HEK293T (cell line): ENCODE measurements at regions of chr1 and their contacts with region 1.

Region 1: GRCh38 chr1:44721485-44722361 is 9.2 kb downstream of the RNU5D-1 start:
- DNase-seq: peak; percentile 80

Region 2: GRCh38 chr1:44696789-44697345 is 24.9 kb before region 1 on chr1:
- CTCF ChIA-PET with region 1: interaction called, 3 read pairs
- POLR2A ChIA-PET with region 1: interaction called, 13 read pairs
- DNase-seq: no peak

Region 3: DNA sequence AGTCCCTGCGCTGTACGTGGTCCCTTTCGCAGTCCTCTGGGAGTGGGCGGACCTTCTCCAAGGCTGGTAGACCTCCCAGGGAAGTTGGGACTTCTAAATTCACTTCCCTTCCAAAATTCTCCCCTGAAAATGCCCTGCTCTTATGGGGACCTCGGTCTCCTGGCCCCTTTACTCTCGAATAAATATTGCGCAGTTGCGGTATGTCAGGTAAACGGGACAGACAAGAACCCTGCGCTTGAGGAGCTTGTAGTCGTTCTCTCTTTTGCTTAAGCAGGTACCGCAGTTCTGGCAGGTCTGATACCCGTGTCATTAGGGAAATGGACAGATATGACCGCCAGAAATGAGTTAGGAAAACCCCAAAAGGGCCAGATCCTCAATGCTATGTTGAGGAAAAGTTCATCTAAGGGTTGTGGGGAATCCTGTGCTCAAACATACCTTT is 18.5 kb after region 1 on chr1:
- CTCF ChIA-PET with region 1: no interaction called
- POLR2A ChIA-PET with region 1: interaction called, 17 read pairs
- DNase-seq: no peak

Region 4: GRCh38 chr1:44799770-44800584 is 78.3 kb after region 1 on chr1 and contains the start of gene PLK3:
- CTCF ChIA-PET with region 1: interaction called, 3 read pairs
- POLR2A ChIA-PET with region 1: interaction called, 15 read pairs
- DNase-seq: peak; percentile 91

Region 5: DNA sequence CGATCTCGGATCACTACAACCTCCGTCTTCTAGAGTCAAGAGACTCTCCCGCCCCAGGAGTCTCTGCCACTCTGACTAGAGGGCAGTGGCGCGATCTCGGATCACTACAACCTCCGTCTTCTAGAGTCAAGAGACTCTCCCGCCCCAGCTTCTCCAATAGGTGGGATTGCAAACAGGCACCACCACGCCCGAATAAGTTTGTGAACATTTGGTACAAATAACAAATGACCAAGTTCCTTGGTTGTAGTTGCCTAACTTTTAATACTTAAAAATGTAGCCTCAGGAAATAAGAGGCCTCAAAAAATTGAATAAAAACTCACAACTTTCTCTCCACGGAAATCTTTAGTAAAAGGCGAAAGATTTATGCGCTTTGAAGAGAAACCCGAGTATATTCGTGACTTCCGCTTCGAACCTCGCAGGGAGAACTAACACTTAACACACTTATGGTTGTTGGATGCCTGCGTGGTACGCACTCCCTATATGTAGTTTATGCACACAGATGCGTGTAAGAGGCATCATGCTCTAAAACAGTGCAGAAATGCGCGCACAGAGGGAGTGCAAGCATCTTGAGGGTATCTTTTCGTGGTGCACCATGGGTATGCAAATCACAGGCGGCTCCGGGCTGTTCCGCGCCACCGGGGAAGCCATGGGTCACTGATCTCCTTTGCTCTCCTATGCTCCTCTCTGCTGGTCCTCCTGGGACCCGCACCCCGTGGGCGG is 98.0 kb after region 1 on chr1:
- CTCF ChIA-PET with region 1: interaction called, 3 read pairs
- POLR2A ChIA-PET with region 1: interaction called, 60 read pairs
- DNase-seq: peak; percentile 85

Region 6: DNA sequence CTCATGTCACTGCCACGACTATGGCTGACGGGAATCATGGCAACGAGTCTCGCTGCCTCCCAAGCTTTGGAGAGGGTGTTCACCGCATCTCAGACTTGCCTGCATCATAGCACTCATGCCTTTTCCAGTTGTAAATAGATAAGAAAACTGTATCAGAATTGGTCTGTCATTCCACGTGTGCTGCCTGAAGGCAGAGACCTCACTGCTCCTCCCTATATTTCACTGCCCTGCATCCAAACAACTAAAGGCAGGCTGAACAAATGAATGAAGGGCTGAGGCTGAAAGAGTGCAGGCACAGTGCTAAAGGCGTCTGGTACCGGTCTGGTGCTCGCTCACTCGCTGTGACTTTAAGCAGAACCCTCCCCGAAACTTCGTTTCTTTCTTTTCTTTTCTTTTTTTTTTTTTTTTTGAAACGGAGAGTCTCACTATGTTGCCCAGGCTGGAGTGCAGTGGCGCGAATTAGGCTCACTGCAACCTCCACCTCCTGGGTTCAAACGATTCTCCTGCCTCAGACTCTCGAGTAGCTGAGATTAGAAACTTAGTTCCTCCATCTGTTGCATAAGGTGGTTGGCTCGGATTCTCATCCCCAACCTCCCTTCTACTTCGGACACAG is 264.1 kb after region 1 on chr1:
- CTCF ChIA-PET with region 1: no interaction called
- POLR2A ChIA-PET with region 1: interaction called, 12 read pairs
- DNase-seq: no peak

Region 7: DNA sequence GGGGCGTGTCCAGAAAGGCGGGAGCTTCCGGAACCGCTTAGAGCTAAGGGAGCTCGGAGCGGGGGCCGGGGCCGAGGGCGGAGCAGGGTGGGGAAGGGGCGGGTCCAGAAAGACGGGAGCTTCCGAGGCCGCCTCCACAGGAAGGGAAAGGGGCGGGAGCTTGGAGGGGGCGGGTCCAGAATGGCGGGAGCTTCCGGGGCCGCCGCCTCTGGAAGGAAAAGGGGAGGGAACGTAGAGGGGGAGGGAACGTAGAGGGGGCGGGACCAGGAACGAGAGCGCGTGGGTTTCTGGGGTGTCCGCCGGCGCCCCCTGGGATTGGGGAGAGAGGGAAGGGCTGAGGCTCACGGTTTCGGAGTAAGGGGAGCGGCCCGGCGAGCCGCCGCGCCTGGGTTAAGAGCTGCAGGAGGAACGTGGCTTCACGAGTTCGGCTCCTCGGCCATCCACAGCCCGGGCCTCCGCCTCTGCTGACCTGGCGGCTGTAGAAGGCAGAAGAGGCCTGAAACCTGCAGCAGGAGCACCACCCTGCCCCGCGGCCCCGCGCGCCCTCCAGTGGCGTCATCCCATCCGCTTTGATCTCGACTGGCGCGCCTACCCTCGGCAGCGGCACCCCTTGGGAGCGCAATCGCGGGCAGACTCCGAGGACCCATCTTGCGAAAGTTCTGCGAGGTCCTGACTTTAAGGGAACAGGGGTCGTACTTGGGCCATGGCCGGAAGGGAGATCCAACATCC is 582.0 kb after region 1 on chr1:
- CTCF ChIA-PET with region 1: no interaction called
- POLR2A ChIA-PET with region 1: interaction called, 12 read pairs
- DNase-seq: peak; percentile 97